Activated CD4-positive, alpha-beta memory T cell treated with anti-CD3 and anti-CD28 coated beads for 36 hours (primary cell): ENCODE measurements at regions of chr10 and their contacts with region 1.

Region 1: DNA sequence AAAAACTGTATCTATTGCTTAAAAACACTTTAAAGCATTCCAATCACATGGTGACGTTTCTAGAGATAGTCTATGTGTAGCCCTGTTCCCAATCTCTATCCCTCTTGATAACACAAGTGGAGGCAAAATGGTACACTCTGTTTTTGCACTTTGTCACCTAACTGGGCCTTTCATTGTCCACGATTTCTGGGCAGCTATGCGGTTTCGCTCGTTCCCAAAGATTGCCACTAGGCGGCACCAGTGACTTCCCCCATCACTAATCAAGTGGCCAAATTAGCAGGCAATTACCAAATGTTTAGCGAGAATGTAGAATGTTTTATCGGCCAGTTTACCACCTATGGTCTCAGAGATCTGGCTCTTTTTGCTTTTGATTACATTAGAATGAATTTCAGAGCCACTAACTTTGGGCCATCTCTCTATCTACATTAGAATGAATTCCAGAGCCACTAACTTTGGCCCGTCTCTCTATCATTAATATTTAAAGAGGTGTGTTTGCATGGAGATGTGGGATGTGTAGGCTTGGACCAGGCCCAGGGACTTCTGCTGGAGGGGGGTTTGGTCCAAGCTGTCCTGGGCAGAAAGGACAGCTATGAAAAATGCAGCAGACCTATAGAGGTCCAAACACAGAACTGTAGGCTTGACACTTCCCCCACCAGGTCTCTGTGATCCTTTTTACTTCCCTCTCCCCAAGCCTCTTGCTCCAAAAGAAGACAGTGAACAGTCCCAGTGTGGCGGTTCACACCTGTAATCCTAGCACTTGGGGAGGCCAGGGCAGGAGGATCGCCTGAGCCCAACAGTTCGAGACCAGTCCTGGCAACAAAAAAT is 90.1 kb downstream of the EPC1 start:
- DNase-seq: peak; percentile 81
- H3K4me3 Mint-ChIP-seq: no peak overlapping the region
- H3K27ac Mint-ChIP-seq: no peak overlapping the region
- H3K4me1 Mint-ChIP-seq: peaks cover 15% of the 10 kb centered on the region
- H3K27me3 Mint-ChIP-seq: no peaks in the 10 kb centered on the region

Region 2: DNA sequence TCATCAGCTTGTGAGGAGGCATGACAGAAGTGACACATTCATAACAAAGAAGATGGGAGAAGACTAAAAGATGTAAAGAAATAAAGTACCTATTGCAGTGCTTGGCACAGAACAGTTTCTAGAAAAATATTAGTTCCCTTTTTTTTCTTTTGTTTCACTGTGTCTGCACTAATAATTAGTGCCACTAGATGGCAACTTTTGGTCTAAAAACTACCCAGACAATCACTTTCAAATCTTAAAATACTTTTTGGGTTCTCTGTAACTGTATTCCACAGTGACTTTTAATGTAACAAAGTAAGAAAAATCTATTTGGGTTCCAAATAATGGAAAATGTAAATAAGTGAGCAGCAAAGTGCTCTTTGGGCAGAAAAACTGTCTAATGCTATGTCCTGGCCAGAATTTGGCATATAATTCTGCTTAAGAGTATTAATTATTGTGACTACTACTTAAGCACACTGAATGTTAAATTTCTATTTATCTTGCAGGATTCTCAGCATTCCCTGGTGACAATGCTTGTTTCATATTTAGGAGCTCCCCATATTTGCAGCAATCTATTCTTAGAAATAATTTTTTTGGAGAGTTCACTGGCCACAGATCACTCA is 65.8 kb before region 1 on chr10:
- CTCF ChIA-PET with region 1: no interaction called
- POLR2A ChIA-PET with region 1: no interaction called
- intact Hi-C with region 1: loop called (anchors 10 kb)
- DNase-seq: no peak
- H3K4me3 Mint-ChIP-seq: no peak overlapping the region
- H3K27ac Mint-ChIP-seq: no peak overlapping the region
- H3K4me1 Mint-ChIP-seq: no peaks in the 10 kb centered on the region
- H3K27me3 Mint-ChIP-seq: no peaks in the 10 kb centered on the region

Region 3: GRCh38 chr10:32433542-32433941 is 176.7 kb after region 1 on chr10:
- CTCF ChIA-PET with region 1: no interaction called
- POLR2A ChIA-PET with region 1: no interaction called
- intact Hi-C with region 1: no loop called
- DNase-seq: no peak
- H3K4me3 Mint-ChIP-seq: no peak overlapping the region
- H3K27ac Mint-ChIP-seq: no peak overlapping the region
- H3K4me1 Mint-ChIP-seq: peaks cover 6% of the 10 kb centered on the region
- H3K27me3 Mint-ChIP-seq: no peaks in the 10 kb centered on the region